ENCODE measurements at regions of chrX and their contacts with region 1.

Region 1: DNA sequence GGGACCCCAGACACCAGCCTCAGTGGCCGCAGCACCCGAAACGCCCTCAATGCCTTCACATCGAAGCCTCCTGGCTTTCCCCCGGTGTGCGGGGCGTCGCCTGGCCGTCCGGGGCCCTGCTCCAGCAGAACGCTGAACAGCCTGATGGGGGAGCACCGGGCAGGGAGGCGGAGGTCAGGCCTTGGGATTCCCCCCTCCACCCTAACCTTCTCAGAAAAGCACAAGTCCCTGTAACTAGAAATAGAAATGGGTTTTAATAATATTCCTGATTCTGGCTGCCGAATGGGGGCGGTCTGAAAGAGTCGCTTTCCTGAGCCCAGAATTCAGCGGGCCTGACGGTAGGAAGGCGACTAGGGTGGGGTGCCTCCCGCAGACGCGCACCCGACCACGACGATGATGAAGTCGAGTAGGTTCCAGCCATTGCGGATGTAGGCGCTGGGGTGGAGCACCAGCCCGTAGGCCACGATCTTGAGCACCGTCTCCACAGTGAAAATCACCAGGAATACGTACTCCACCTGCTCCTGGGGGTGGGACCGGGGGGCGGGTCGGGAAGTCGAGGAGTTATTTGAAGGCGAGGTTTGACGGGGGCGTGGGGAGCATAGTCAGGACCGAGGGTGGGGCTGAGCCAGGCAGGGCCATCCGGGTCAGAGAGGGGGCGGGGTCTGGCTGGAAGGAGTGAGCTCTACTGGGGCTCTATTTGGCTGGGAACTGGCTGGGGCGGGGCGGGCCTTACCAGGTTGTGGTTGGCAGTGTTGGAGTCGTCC is 2.5 kb downstream of the CACNA1F start:
- DNase-seq: peak; percentile 77
- ATAC-seq: peak; percentile 75
- H3K4me3 ChIP-seq: peak overlapping the region in 4 of 5 experiments; percentile 54 to 64 (median 60)
- H3K4me3 Mint-ChIP-seq: peak overlapping the region; percentile 89
- H3K27ac ChIP-seq: peak overlapping the region; percentile 87 to 88
- H3K27ac Mint-ChIP-seq: peak overlapping the region; percentile 97
- H3K4me1 ChIP-seq: peaks cover 5 to 21% of the 10 kb centered on the region in 2 donors
- H3K4me1 Mint-ChIP-seq: peaks cover 18% of the 10 kb centered on the region
- H3K27me3 ChIP-seq: no peaks in the 10 kb centered on the region
- H3K27me3 Mint-ChIP-seq: no peaks in the 10 kb centered on the region
- CTCF ChIP-seq: peak; percentile 36

Region 2: GRCh38 chrX:49199906-49200771 is 30.5 kb before region 1 on chrX and contains the start of gene SYP:
- CTCF ChIA-PET with region 1: no interaction called
- POLR2A ChIA-PET with region 1: no interaction called
- intact Hi-C with region 1: loop called (anchors 1 kb)
- DNase-seq: peak; percentile 91
- ATAC-seq: peak; percentile 99
- H3K4me3 ChIP-seq: peak within 1 kb of the TSS; percentile 35 to 59 (median 57)
- H3K4me3 Mint-ChIP-seq: peak within 1 kb of the TSS; percentile 77
- H3K27ac ChIP-seq: peak within 1 kb of the TSS; percentile 57 to 72
- H3K27ac Mint-ChIP-seq: peak within 1 kb of the TSS; percentile 70
- H3K4me1 ChIP-seq: peaks cover 4 to 13% of the 10 kb centered on the region in 2 donors
- H3K4me1 Mint-ChIP-seq: peaks cover 6% of the 10 kb centered on the region
- H3K27me3 ChIP-seq: no peaks in the 10 kb centered on the region
- H3K27me3 Mint-ChIP-seq: no peaks in the 10 kb centered on the region
- CTCF ChIP-seq: no peak
- total RNA-seq, gene SYP: 1.2 TPM in 2 replicates

Region 3: DNA sequence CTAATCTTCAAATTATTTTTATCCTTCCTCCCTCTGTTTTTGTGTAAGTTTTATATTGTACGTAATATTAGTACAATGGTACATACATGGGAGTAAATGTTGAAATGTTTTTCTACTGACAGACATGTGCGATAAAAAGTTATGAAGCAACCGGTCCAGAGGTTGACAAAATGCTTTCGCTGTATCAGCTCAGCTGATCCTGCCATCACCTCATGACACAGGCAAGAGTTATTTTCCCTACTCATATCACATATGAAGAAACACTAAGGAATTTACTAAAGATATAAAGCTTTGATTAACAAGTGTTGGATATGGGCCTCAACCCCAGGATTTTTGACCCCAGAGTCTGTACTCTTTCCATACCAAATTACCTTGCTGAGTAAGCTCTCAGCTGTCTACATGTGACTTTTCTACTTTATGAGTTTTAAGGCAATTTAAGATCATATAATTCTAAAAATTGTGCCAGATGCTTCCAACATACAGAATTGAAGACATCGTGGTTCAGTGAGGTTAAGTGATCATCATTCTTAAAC is 741.7 kb after region 1 on chrX:
- CTCF ChIA-PET with region 1: no interaction called
- POLR2A ChIA-PET with region 1: no interaction called
- intact Hi-C with region 1: no loop called
- DNase-seq: no peak
- ATAC-seq: no peak
- H3K4me3 ChIP-seq: no peak overlapping the region
- H3K4me3 Mint-ChIP-seq: no peak overlapping the region
- H3K27ac ChIP-seq: no peak overlapping the region
- H3K27ac Mint-ChIP-seq: no peak overlapping the region
- H3K4me1 ChIP-seq: no peaks in the 10 kb centered on the region
- H3K4me1 Mint-ChIP-seq: peaks cover 2% of the 10 kb centered on the region
- H3K27me3 ChIP-seq: no peaks in the 10 kb centered on the region
- H3K27me3 Mint-ChIP-seq: no peaks in the 10 kb centered on the region
- CTCF ChIP-seq: no peak

Measured in B cell (primary cell).